SK-N-SH (cell line): ENCODE measurements at regions of chr17 and their contacts with region 1.

Region 1: GRCh38 chr17:74379495-74380085 is 12.3 kb downstream of the GPR142 start:
- DNase-seq: peak; percentile 98
- H3K4me3 ChIP-seq: no peak overlapping the region
- H3K27ac ChIP-seq: no peak overlapping the region
- H3K4me1 ChIP-seq: peaks cover 0 to 2% of the 10 kb centered on the region in 2 experiments; a peak in 1 of 4 replicates
- H3K27me3 ChIP-seq: no peaks in the 10 kb centered on the region
- CTCF ChIP-seq: peak; percentile 52
- EP300 ChIP-seq: no peak
- RAD21 ChIP-seq: peak; percentile 99

Region 2: GRCh38 chr17:74354123-74354522 is 25.5 kb before region 1 on chr17:
- CTCF ChIA-PET with region 1: interaction called, 51 read pairs
- POLR2A ChIA-PET with region 1: no interaction called
- DNase-seq: peak; percentile 94
- H3K4me3 ChIP-seq: no peak overlapping the region
- H3K27ac ChIP-seq: no peak overlapping the region
- H3K4me1 ChIP-seq: peaks cover 0 to 2% of the 10 kb centered on the region in 2 experiments; a peak in 1 of 4 replicates
- H3K27me3 ChIP-seq: no peaks in the 10 kb centered on the region
- CTCF ChIP-seq: no peak
- EP300 ChIP-seq: no peak
- RAD21 ChIP-seq: peak; percentile 54

Region 3: DNA sequence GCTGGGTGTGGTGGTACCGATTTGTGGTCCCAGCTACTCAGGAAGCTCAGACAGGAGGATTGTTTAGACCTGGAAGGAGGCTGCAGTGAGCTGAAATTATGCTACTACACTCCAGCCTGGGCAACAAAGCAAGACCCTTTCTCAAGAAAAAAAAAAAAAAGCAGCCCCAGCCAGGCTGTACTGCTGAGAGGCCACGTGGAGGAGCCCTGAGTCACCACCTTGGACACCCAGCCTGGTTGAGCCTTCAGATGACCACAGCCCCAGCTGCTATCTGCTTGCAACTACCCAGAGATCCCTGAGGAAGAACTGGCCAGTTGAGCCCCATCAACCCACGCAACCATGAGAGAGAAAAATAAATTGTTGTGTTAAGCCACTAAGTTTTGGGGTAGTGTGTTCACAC is 28.7 kb after region 1 on chr17:
- CTCF ChIA-PET with region 1: interaction called, 17 read pairs
- POLR2A ChIA-PET with region 1: no interaction called
- DNase-seq: no peak
- H3K4me3 ChIP-seq: no peak overlapping the region
- H3K27ac ChIP-seq: no peak overlapping the region
- H3K4me1 ChIP-seq: peaks cover 0 to 6% of the 10 kb centered on the region in 2 experiments; a peak in 1 of 4 replicates
- H3K27me3 ChIP-seq: no peaks in the 10 kb centered on the region
- CTCF ChIP-seq: no peak
- EP300 ChIP-seq: no peak
- RAD21 ChIP-seq: no peak

Region 4: DNA sequence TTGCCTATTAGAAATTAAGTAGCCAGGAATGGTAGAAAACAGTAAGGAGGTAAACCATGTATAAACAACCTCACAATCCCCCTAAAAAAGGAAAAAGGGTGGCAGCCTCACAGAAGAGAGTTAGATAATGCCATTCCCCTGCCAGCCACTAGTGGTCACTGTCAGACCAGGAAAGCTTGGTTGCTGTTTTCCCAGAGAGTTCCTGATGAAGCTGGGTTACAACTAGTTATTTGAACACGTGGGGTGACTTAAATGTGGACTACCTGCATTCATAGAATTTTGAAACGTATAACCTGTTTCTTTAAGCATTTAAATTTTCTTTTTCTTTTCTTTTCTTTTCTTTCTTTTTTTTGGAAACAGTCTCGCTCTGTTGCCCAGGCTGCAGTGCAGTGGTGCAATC is 58.1 kb after region 1 on chr17:
- CTCF ChIA-PET with region 1: interaction called, 39 read pairs
- POLR2A ChIA-PET with region 1: no interaction called
- DNase-seq: peak; percentile 68
- H3K4me3 ChIP-seq: no peak overlapping the region
- H3K27ac ChIP-seq: no peak overlapping the region
- H3K4me1 ChIP-seq: no peaks in the 10 kb centered on the region; a peak in 1 of 4 replicates
- H3K27me3 ChIP-seq: no peaks in the 10 kb centered on the region
- CTCF ChIP-seq: peak; percentile 67
- EP300 ChIP-seq: no peak
- RAD21 ChIP-seq: peak; percentile 55

Region 5: DNA sequence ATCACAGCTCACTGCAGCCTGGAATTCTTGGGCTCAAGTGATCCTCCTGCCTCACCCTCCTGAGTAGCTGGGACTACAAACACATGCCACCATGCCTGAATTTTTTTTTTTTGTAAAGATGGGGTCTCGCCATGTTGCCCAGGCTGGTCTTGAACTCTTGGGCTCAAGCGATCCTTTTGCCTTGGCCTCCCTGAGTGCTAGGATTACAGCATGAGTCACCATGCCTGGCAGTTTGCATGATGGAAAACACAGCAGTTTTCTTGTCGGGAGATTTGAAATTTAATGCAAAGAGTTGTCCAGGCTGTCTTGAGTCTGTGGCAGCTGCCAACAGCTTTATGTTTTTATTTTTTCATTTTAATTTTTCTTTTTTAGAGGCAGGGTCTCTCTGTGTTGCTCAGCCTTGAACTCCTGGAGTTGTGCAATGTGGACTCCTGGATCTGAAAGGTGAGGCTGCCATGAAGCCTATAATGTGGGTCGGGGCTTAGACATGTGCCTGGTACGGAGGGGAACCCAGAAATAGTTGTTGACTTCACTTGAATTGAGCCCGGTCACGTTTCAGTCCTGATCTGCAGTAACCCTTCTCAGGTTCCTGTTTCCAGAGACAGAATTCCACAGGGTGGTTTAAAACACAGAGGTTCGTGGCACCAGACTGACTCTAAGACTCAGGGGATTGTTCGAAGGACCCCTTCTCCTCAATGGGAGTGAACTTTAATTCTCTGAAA is 105.6 kb after region 1 on chr17:
- CTCF ChIA-PET with region 1: interaction called, 85 read pairs
- POLR2A ChIA-PET with region 1: no interaction called
- DNase-seq: no peak
- H3K4me3 ChIP-seq: no peak overlapping the region
- H3K27ac ChIP-seq: no peak overlapping the region
- H3K4me1 ChIP-seq: no peaks in the 10 kb centered on the region
- H3K27me3 ChIP-seq: no peaks in the 10 kb centered on the region
- CTCF ChIP-seq: no peak
- EP300 ChIP-seq: no peak
- RAD21 ChIP-seq: no peak

Region 6: GRCh38 chr17:74528491-74529199 is 149.1 kb after region 1 on chr17:
- CTCF ChIA-PET with region 1: interaction called, 19 read pairs
- POLR2A ChIA-PET with region 1: no interaction called
- DNase-seq: no peak
- H3K4me3 ChIP-seq: no peak overlapping the region
- H3K27ac ChIP-seq: no peak overlapping the region
- H3K4me1 ChIP-seq: no peaks in the 10 kb centered on the region
- H3K27me3 ChIP-seq: no peaks in the 10 kb centered on the region
- CTCF ChIP-seq: no peak
- EP300 ChIP-seq: no peak
- RAD21 ChIP-seq: no peak